Transverse colon (tissue), 4 donors: ENCODE measurements at regions of chr4 and their contacts with region 1.

Region 1: GRCh38 chr4:15956179-15956850 is 6.7 kb downstream of the FGFBP2 start:
- DNase-seq: peak; percentile 92
- H3K4me3 ChIP-seq: no peak overlapping the region
- H3K27ac ChIP-seq: no peak overlapping the region
- H3K4me1 ChIP-seq: no peaks in the 10 kb centered on the region
- H3K27me3 ChIP-seq: no peaks in the 10 kb centered on the region
- CTCF ChIP-seq: peak; percentile 82 to 99 (median 90)
- EP300 ChIP-seq: no peak
- POLR2A ChIP-seq: no peak

Region 2: DNA sequence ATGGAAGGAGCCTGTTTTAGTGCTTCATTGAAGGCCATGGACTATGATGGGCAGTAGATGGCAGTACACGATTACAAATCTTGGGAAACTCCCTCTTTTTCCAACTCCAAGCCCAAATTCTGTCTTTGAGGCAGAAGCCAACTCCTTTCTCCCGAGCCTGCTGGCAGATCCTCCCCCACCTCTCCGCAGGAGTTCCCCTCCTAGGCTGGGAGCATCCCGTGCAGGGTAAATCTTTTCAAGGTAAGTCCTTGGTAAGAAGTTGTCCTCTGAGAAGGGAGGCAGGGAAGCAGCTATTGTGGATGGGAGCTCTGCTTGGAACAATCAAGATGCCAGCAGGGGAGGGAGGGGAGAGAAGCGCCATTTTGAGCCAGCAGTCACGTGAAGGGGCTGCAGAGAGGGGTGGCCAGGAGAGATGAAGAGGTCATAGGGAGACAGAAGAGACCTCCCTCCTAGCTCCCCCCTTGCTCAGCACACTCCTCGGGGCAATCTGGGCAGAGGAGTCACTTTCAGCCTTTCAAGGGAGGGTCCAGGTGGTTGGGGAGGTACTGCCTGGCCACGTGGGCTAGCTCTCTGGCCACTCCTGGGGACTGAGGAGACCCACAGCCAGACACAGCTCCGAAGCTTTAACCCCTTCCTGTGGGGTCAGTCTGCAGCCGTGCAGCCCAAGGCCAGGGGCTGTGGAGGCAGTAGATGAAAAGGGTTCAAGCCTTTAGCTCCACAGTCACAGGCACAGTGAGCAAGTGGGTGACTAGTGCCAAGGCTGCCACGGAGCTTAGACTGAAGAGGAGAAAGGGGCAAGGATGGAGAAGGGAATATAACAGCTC is 477.0 kb before region 1 on chr4:
- in situ Hi-C with region 1: loop called in 1 of 4 experiments (anchors 25 kb)
- intact Hi-C with region 1: no loop called
- DNase-seq: no peak
- H3K4me3 ChIP-seq: peak overlapping the region in 3 of 4 donors; percentile 17 to 35 (median 21)
- H3K27ac ChIP-seq: peak overlapping the region; percentile 57 to 83 (median 82)
- H3K4me1 ChIP-seq: peaks cover 0 to 8% (median 6%) of the 10 kb centered on the region in 4 donors
- H3K27me3 ChIP-seq: no peaks in the 10 kb centered on the region
- CTCF ChIP-seq: peak; percentile 40 to 58 (median 50)
- EP300 ChIP-seq: no peak
- POLR2A ChIP-seq: no peak

Region 3: DNA sequence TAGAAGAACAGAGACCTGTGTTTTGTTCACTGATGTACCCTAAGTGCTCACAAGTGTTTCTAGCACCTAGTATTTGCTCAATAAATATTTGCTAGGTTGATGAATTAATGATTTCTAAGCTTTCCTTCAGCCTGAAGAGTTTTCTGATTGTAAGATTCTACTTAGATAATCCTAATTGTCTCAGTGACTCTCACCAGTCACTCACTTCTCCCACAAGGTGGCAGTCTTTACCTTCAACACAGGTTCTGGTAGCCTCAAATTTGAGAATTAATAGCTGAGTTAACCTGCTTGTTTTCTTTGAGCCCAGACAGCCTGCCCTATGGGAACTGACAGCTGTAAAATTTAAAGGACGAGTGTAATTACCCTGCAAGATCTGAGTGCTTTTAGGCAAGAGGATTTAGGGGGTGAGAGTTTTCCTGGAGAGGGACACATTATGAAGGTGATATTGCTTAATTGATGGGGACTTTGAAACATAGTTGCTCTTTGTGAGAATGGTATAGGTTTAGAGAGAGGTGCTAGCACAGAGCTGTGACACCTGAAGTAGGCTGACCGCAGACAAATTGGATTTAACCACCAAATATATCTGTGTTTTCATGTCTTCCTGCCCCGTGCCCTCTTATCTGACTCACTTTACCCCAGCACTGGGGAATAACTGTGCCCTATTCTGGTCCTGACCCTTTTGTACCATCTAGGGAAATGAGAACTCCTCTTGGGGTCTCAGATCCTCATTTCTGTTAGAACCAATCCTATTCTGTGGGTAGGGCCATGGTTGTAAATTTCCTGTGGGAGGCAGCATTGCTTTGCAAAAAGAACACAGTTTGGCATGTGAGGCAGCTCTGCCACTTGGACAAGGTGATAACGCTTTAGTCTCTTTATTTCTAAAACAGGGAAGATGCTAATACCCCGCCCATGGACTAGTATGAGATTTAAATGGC is 150.5 kb before region 1 on chr4:
- in situ Hi-C with region 1: loop called in 2 of 4 experiments (anchors 10 kb)
- intact Hi-C with region 1: no loop called
- DNase-seq: no peak
- H3K4me3 ChIP-seq: no peak overlapping the region
- H3K27ac ChIP-seq: no peak overlapping the region
- H3K4me1 ChIP-seq: peaks cover 0 to 6% (median 0%) of the 10 kb centered on the region in 4 donors
- H3K27me3 ChIP-seq: no peaks in the 10 kb centered on the region
- CTCF ChIP-seq: peak; percentile 68 to 73 (median 69)
- EP300 ChIP-seq: no peak
- POLR2A ChIP-seq: no peak

Region 4: DNA sequence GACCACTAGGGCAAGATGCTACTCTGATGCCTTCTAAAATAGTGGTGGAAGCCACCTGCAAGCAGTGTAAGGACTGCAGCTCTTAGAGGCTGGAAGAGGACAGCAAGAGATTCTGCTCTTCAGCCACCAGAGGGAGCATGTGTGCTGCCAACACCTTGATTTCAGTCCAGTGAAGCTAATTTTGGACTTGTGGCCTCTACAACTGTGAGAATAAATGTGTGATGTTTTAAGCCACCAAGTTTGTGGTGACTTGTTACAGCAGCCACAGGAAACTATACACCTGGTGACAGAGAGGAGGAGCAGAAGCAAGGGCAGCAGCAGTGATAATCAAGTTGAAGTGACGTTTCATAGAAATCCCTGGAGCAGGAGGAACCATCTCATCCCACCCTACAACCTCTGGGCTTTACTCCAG is 73.6 kb before region 1 on chr4:
- in situ Hi-C with region 1: loop called in 2 of 4 experiments (anchors 10 kb)
- intact Hi-C with region 1: loop called (anchors 10 kb)
- DNase-seq: peak; percentile 33
- H3K4me3 ChIP-seq: no peak overlapping the region
- H3K27ac ChIP-seq: no peak overlapping the region
- H3K4me1 ChIP-seq: peaks cover 3 to 18% (median 12%) of the 10 kb centered on the region in 4 donors
- H3K27me3 ChIP-seq: no peaks in the 10 kb centered on the region
- CTCF ChIP-seq: peak; percentile 85 to 94 (median 88)
- EP300 ChIP-seq: no peak
- POLR2A ChIP-seq: no peak